A549 (cell line): ENCODE measurements at regions of chr6 and their contacts with region 1.

Region 1: GRCh38 chr6:33299237-33299944 is 649 bp upstream of the RGL2 start:
- DNase-seq: peak; percentile 74 to 89
- ATAC-seq: peak; percentile 80
- H3K4me3 ChIP-seq: peak overlapping the region; percentile 53
- H3K27ac ChIP-seq: peak overlapping the region; percentile 72 to 98
- H3K4me1 ChIP-seq: peaks cover 4% of the 10 kb centered on the region; the same call in 1 of the 3 replicates
- CTCF ChIP-seq: peak; percentile 63
- EP300 ChIP-seq: no peak
- POLR2A ChIP-seq: peak; percentile 83
- RAD21 ChIP-seq: peak; percentile 31; a peak in 1 of 5 replicates

Region 2: GRCh38 chr6:33061987-33062386 is 237.4 kb before region 1 on chr6:
- CTCF ChIA-PET with region 1: no interaction called
- POLR2A ChIA-PET with region 1: no interaction called
- DNase-seq: peak in 1 of 2 experiments; percentile 18
- ATAC-seq: no peak
- H3K4me3 ChIP-seq: no peak overlapping the region
- H3K27ac ChIP-seq: no peak overlapping the region
- H3K4me1 ChIP-seq: no peaks in the 10 kb centered on the region
- CTCF ChIP-seq: no peak
- EP300 ChIP-seq: no peak
- POLR2A ChIP-seq: no peak
- RAD21 ChIP-seq: no peak

Region 3: GRCh38 chr6:33191383-33192104 is 107.8 kb before region 1 on chr6:
- CTCF ChIA-PET with region 1: no interaction called
- POLR2A ChIA-PET with region 1: no interaction called
- DNase-seq: no peak
- ATAC-seq: peak in 1 of 2 experiments; percentile 36; a peak in 4 of 6 replicates
- H3K4me3 ChIP-seq: no peak overlapping the region
- H3K27ac ChIP-seq: no peak overlapping the region
- H3K4me1 ChIP-seq: no peaks in the 10 kb centered on the region
- CTCF ChIP-seq: no peak
- EP300 ChIP-seq: no peak
- POLR2A ChIP-seq: no peak
- RAD21 ChIP-seq: no peak

Region 4: DNA sequence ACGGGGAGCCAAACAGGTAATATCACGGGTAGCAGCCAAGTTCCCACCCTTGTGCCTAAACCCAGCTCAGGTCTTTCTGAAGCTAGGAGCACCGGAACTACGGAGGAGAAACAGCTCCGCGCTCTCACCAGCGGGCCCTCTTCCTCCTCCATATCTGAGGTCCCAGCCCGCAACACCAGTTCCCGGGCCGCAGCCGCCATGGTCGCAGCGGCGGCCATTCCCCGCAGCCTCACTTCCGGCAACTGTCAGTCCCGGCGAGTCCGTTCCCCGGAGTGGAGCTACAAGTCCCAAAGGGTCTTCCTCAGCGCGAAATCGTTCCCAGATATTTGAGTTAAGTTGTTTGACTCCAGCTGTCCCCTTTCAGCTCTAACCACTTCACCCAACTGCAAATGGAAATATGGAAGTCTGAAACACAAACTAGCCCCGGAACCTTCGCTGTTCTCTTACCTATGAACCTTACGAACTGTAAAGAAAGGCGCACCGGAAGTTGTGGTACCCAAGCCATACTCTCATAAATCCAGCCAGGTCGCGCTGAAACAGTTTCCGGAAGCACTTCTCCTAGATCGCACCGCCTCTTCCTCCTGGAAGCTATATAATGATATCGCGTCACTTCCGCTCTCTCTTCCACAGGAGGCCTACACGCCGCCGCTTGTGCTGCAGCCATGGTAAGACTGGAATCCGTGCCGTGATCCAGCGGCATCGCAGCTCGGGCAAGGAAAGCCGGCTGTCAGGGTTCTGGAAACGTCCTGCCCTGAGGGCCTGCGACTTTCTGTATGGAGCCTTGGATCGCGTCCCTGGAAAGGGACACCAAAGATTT is 27.7 kb before region 1 on chr6 and contains the starts of genes RPS18 and VPS52:
- CTCF ChIA-PET with region 1: interaction called, 16 read pairs
- POLR2A ChIA-PET with region 1: interaction called, 15 read pairs
- DNase-seq: peak; percentile 76 to 99
- ATAC-seq: peak; percentile 89 to 92
- H3K4me3 ChIP-seq: peak within 1 kb of the TSS; percentile 87
- H3K27ac ChIP-seq: peak within 1 kb of the TSS; percentile 91 to 97
- H3K4me1 ChIP-seq: peaks cover 39% of the 10 kb centered on the region
- CTCF ChIP-seq: no peak
- EP300 ChIP-seq: no peak
- POLR2A ChIP-seq: peak; percentile 98
- RAD21 ChIP-seq: no peak
- polyA plus RNA-seq, gene RPS18: 3,426 and 3,692 TPM in 2 replicates
- polyA plus RNA-seq, gene VPS52: 38.9 and 44.3 TPM in 2 replicates

Region 5: DNA sequence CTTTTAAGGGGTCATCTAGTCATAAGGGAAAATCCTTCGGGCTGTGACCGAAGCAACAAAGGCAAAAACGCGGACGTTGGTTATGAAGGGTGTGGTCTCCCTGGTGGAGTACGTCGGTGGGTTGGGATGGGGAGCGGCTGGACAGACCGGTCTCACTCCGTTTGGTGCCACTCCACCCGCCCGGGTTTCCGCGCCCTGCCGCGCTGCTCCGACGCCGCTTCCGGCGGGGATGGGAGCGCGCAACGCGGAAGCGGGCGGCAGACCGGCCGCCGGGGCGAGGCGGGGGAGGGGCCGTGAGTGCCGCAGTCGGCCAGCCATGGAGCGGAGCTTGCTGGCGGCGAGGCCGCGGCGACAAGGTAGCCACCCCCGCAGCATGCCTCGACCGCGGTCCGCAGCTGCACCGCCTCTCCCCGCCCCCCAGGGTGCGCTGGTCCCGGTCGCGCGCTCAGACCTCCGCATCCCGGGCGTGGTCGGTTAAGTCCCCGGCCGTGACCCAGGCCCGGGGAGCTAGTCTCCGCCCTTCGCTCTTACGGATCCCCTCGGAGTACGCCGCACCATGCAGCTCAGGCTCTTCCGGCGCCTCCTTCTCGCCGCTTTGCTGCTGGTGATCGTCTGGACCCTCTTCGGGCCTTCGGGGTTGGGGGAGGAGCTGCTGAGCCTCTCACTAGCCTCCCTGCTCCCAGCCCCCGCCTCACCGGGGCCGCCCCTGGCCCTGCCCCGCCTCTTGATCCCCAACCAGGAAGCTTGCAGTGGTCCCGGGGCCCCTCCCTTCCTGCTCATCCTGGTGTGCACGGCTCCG is 22.3 kb before region 1 on chr6 and contains the start of gene B3GALT4:
- CTCF ChIA-PET with region 1: interaction called, 16 read pairs
- POLR2A ChIA-PET with region 1: interaction called, 15 read pairs
- DNase-seq: peak; percentile 46 to 73
- ATAC-seq: peak; percentile 52 to 65
- H3K4me3 ChIP-seq: peak within 1 kb of the TSS; percentile 87
- H3K27ac ChIP-seq: peak within 1 kb of the TSS; percentile 68 to 97
- H3K4me1 ChIP-seq: peaks cover 41% of the 10 kb centered on the region
- CTCF ChIP-seq: no peak; the same call in 2 of the 3 replicates
- EP300 ChIP-seq: no peak
- POLR2A ChIP-seq: 0 out of 2 replicates have a peak, but pooled peaks have one; percentile 21
- RAD21 ChIP-seq: no peak
- polyA plus RNA-seq, gene B3GALT4: 0.54 and 0.74 TPM in 2 replicates

Region 6: DNA sequence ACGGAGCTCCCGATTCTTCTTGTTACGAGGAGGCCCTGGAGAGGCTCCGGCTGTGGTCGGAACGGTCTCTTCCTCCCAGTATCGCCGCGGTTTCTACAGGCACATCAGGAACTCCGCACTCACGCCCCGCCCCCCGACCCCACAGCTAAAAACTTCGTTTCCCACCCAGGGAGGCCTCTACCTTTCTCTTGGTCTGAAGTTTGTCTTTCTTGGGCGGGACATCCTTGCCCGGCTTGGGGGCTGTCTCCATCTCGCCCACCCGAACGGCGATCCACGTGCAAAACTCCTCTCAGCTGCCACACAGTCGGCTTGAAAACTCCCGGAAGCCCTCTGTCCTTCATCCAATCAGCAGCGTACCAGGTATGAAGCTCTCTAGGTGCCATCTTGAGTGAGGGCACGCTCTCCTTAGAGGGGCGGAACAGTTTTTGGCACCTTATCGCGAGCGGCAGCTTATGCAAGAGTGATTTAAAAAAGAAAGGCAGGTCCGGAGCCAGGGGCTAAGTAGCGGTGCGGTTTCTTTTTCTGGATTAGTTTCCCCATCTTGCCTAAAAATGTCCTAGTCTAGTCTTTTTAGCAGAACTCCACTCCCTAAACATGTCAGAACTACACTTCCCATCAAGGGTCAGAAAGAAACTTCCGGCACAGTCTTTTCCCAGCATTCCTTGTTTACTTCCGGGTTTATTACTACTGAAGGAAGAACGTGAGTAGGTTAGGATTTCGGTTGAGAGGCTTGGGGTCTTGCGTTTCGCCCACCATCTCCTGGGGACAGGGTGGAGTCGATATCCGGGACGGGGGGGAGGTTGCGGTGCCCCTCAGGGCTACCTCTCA is 10.3 kb before region 1 on chr6 and contains the starts of genes PFDN6 and WDR46:
- CTCF ChIA-PET with region 1: interaction called, 11 read pairs
- POLR2A ChIA-PET with region 1: interaction called, 20 read pairs
- DNase-seq: peak; percentile 86 to 96
- ATAC-seq: peak; percentile 98
- H3K4me3 ChIP-seq: peak within 1 kb of the TSS; percentile 81
- H3K27ac ChIP-seq: peak within 1 kb of the TSS; percentile 80 to 91
- H3K4me1 ChIP-seq: peaks cover 13% of the 10 kb centered on the region; the same call in 2 of the 3 replicates
- CTCF ChIP-seq: no peak
- EP300 ChIP-seq: no peak
- POLR2A ChIP-seq: peak; percentile 27
- RAD21 ChIP-seq: no peak
- polyA plus RNA-seq, gene PFDN6: 61.2 and 84.6 TPM in 2 replicates
- polyA plus RNA-seq, gene WDR46: 35.1 TPM in 2 replicates

Region 7: GRCh38 chr6:33317669-33318425 is 18.5 kb after region 1 on chr6 and contains the start of gene ZBTB22:
- CTCF ChIA-PET with region 1: interaction called, 40 read pairs
- POLR2A ChIA-PET with region 1: interaction called, 14 read pairs
- DNase-seq: peak; percentile 86 to 97
- ATAC-seq: peak; percentile 65 to 82
- H3K4me3 ChIP-seq: peak within 1 kb of the TSS; percentile 41
- H3K27ac ChIP-seq: peak within 1 kb of the TSS; percentile 69 to 91
- H3K4me1 ChIP-seq: peaks cover 42% of the 10 kb centered on the region
- CTCF ChIP-seq: no peak
- EP300 ChIP-seq: no peak
- POLR2A ChIP-seq: no peak
- RAD21 ChIP-seq: no peak
- polyA plus RNA-seq, gene ZBTB22: 3.2 and 4.2 TPM in 2 replicates

Region 8: DNA sequence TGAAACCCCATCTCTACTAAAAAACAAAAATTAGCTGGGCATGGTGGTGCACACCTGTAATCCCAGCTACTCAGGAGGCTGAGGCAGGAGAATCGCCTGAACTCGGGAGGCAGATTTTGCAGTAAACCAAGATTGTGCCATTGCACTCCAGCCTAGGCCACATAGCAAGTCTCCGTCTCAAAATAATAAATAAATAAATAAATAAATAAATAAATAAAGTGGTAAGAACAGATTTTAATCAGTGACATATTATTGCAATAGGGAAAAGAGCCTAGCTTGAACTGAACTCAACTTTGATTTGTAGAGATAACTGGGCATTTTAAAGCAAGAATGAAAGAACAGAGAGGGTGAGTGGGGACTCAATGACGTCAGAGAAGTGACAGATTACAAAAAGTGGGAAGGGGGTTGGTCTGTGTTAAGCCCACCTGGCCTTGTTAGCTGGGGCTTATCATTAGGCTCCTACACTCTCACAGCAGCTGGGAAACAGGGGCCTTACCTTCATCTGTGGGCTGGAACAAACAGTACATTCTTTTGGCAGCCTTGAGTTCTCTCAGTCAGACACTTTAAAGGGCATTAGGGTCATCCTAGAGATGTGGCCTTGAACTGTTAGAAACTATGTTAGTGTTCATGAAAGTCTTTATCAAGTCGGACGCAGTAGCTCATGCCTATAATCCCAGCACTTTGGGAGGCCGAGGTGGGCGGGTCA is 67.8 kb after region 1 on chr6:
- CTCF ChIA-PET with region 1: no interaction called
- POLR2A ChIA-PET with region 1: no interaction called
- DNase-seq: no peak
- ATAC-seq: no peak
- H3K4me3 ChIP-seq: no peak overlapping the region
- H3K27ac ChIP-seq: no peak overlapping the region
- H3K4me1 ChIP-seq: no peaks in the 10 kb centered on the region
- CTCF ChIP-seq: no peak
- EP300 ChIP-seq: no peak
- POLR2A ChIP-seq: no peak
- RAD21 ChIP-seq: no peak

Region 9: GRCh38 chr6:34546551-34547321 is 1247.3 kb after region 1 on chr6:
- CTCF ChIA-PET with region 1: no interaction called
- POLR2A ChIA-PET with region 1: no interaction called
- DNase-seq: peak; percentile 35 to 73
- ATAC-seq: peak; percentile 58 to 66
- H3K4me3 ChIP-seq: no peak overlapping the region
- H3K27ac ChIP-seq: peak overlapping the region; percentile 74 to 93
- H3K4me1 ChIP-seq: peaks cover 66% of the 10 kb centered on the region
- CTCF ChIP-seq: no peak
- EP300 ChIP-seq: peak in 1 of 2 experiments; percentile 51; a peak in 1 of 5 replicates
- POLR2A ChIP-seq: no peak
- RAD21 ChIP-seq: peak in 1 of 2 experiments; percentile 38; a peak in 2 of 5 replicates